Activated CD4-positive, alpha-beta T cell treated with anti-CD3 and anti-CD28 coated beads, Interleukin-2, amount 10 ng/mL, durations not matched to agents 24 days and 14 days (primary cell): ENCODE measurements at regions of chr7 and their contacts with region 1.

Region 1: GRCh38 chr7:1532483-1533424 is 2.3 kb downstream of the MAFK start:
- DNase-seq: peak; percentile 87
- H3K4me3 Mint-ChIP-seq: peak overlapping the region; percentile 91
- H3K27ac Mint-ChIP-seq: peak overlapping the region; percentile 94
- H3K4me1 Mint-ChIP-seq: peaks cover 24% of the 10 kb centered on the region
- H3K27me3 Mint-ChIP-seq: no peaks in the 10 kb centered on the region

Region 2: DNA sequence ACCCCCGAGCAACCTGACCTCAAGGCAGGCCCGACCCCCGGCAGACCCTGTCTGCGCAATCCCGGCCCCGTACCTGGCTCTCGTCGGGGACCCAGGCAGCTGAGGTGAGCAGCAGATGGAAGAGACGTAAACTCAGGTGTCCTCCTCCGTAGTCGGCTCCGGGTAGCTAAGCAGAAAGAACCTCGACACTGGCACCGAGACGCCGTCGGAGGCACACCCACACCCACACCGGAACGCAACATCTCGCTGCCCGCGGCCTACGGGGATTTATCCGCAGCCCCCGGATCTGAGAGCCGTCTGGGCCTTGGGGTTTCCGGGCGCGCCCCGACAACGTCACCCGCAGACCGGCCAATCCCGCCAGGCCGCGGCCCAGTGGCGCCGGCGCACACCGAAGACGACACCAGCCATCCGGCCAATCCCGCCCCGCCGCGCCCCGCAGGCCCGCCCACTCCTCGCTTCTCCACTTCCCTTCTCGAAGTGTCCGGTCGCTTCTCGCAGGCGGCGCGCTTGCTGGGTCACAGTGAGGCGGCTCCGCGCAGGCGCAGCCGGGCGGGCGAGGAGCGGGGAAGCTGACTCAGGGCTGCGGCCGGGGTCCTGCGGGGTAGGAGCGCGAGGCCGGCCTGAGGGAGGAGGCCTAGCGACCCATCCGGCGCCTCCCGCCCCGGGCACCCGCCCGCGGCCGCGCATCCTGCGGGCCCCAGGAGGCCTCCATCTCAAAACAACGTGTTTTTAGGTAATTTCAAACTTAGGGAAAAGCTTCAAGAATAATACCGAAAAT is 372.7 kb before region 1 on chr7 and contains the start of gene ZFAND2A:
- intact Hi-C with region 1: loop called (anchors 5 kb)
- DNase-seq: peak; percentile 100
- H3K4me3 Mint-ChIP-seq: peak within 1 kb of the TSS; percentile 93
- H3K27ac Mint-ChIP-seq: peak within 1 kb of the TSS; percentile 89
- H3K4me1 Mint-ChIP-seq: peaks cover 18% of the 10 kb centered on the region
- H3K27me3 Mint-ChIP-seq: no peaks in the 10 kb centered on the region
- total RNA-seq, gene ZFAND2A: 19.9 and 24.2 TPM in 2 replicates

Region 3: GRCh38 chr7:1459522-1459892 is 73.2 kb before region 1 on chr7:
- intact Hi-C with region 1: loop called (anchors 2 kb)
- DNase-seq: peak; percentile 99
- H3K4me3 Mint-ChIP-seq: peak overlapping the region; percentile 78
- H3K27ac Mint-ChIP-seq: no peak overlapping the region
- H3K4me1 Mint-ChIP-seq: peaks cover 2% of the 10 kb centered on the region
- H3K27me3 Mint-ChIP-seq: peaks cover 2% of the 10 kb centered on the region

Region 4: GRCh38 chr7:1503816-1504775 is 28.7 kb before region 1 on chr7 and contains the start of gene INTS1:
- intact Hi-C with region 1: loop called (anchors 1 kb)
- DNase-seq: peak; percentile 98
- H3K4me3 Mint-ChIP-seq: peak within 1 kb of the TSS; percentile 92
- H3K27ac Mint-ChIP-seq: peak within 1 kb of the TSS; percentile 92
- H3K4me1 Mint-ChIP-seq: peaks cover 33% of the 10 kb centered on the region
- H3K27me3 Mint-ChIP-seq: no peaks in the 10 kb centered on the region
- total RNA-seq, gene INTS1: 89.5 and 94.3 TPM in 2 replicates

Region 5: GRCh38 chr7:1569833-1570633 is 37.3 kb after region 1 on chr7 and contains the start of gene PSMG3:
- intact Hi-C with region 1: loop called (anchors 1 kb)
- DNase-seq: peak; percentile 97
- H3K4me3 Mint-ChIP-seq: peak within 1 kb of the TSS; percentile 95
- H3K27ac Mint-ChIP-seq: peak within 1 kb of the TSS; percentile 92
- H3K4me1 Mint-ChIP-seq: peaks cover 26% of the 10 kb centered on the region
- H3K27me3 Mint-ChIP-seq: no peaks in the 10 kb centered on the region
- total RNA-seq, gene PSMG3: 58.0 and 58.5 TPM in 2 replicates

Region 6: GRCh38 chr7:1638215-1638661 is 105.5 kb after region 1 on chr7:
- intact Hi-C with region 1: no loop called
- DNase-seq: no peak
- H3K4me3 Mint-ChIP-seq: no peak overlapping the region
- H3K27ac Mint-ChIP-seq: no peak overlapping the region
- H3K4me1 Mint-ChIP-seq: no peaks in the 10 kb centered on the region
- H3K27me3 Mint-ChIP-seq: peaks cover 2% of the 10 kb centered on the region

Region 7: DNA sequence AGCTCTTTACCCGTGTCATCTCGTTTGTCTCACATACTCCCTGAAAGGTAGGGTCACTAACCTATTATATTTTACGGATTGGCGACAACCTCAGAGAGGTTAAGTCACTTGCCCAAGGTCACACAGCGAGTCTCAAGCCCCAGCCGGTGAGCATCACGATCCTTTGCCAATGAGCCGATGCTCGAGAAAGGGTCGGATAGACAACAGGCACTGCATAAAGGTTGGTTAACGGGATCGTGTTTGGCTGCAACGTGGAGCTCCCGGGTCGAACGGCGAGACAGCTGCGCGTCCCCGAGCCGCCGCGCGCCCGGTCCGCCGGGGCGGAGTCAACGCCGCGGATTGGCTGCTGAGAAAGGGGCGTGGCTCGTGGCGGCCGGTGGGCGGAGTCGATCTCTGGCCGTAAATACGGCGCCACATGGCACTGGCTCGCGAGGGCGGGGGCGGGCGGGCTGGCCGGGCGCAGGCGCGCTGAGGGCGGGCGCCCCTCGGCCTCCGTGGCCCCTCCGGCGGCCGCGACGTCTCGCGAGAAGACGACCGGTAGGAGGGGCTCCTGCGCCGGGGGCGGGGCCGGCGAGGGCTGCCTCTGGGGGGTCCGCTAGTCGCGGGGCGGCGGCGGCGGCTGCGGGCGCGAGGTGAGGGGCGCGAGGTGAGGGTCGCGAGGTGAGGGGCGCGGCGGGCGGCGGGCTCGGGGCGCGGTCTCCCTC is 870.4 kb after region 1 on chr7 and contains the start of gene CHST12:
- intact Hi-C with region 1: loop called (anchors 2 kb)
- DNase-seq: peak; percentile 99
- H3K4me3 Mint-ChIP-seq: peak within 1 kb of the TSS; percentile 91
- H3K27ac Mint-ChIP-seq: peak within 1 kb of the TSS; percentile 85
- H3K4me1 Mint-ChIP-seq: peaks cover 47% of the 10 kb centered on the region
- H3K27me3 Mint-ChIP-seq: no peaks in the 10 kb centered on the region
- total RNA-seq, gene CHST12: 5.8 and 6.4 TPM in 2 replicates